HepG2 (cell line): ENCODE measurements at regions of chr15 and their contacts with region 1.

Region 1: GRCh38 chr15:73240866-73241499 is 127.8 kb downstream of the HCN4 start:
- DNase-seq: peak; percentile 59
- ATAC-seq: peak; percentile 45; the same call in 2 of the 3 replicates
- H3K4me3 ChIP-seq: no peak overlapping the region
- H3K27ac ChIP-seq: no peak overlapping the region
- H3K4me1 ChIP-seq: no peaks in the 10 kb centered on the region
- H3K27me3 ChIP-seq: no peaks in the 10 kb centered on the region
- CTCF ChIP-seq: peak; percentile 82
- EP300 ChIP-seq: no peak
- POLR2A ChIP-seq: no peak
- RAD21 ChIP-seq: peak; percentile 42; the same call in 1 of the 2 replicates

Region 2: GRCh38 chr15:72796515-72797337 is 444.3 kb before region 1 on chr15:
- CTCF ChIA-PET with region 1: no interaction called
- POLR2A ChIA-PET with region 1: no interaction called
- in situ Hi-C with region 1: no loop called
- intact Hi-C with region 1: loop called (anchors 10 kb)
- DNase-seq: no peak
- ATAC-seq: peak; percentile 96
- H3K4me3 ChIP-seq: peak overlapping the region; percentile 56 to 81 (median 65)
- H3K27ac ChIP-seq: no peak overlapping the region
- H3K4me1 ChIP-seq: peaks cover 10% of the 10 kb centered on the region; the same call in 1 of the 2 replicates
- H3K27me3 ChIP-seq: peaks cover 1 to 14% of the 10 kb centered on the region in 2 experiments; a peak in 4 of 5 replicates
- CTCF ChIP-seq: peak; percentile 54; the same call in 1 of the 2 replicates
- EP300 ChIP-seq: no peak
- POLR2A ChIP-seq: no peak
- RAD21 ChIP-seq: peak; percentile 82

Region 3: GRCh38 chr15:73127301-73127936 is 113.6 kb before region 1 on chr15:
- CTCF ChIA-PET with region 1: no interaction called
- POLR2A ChIA-PET with region 1: no interaction called
- in situ Hi-C with region 1: no loop called
- intact Hi-C with region 1: loop called (anchors 1 kb)
- DNase-seq: peak; percentile 33
- ATAC-seq: peak; percentile 81
- H3K4me3 ChIP-seq: no peak overlapping the region
- H3K27ac ChIP-seq: no peak overlapping the region
- H3K4me1 ChIP-seq: no peaks in the 10 kb centered on the region
- H3K27me3 ChIP-seq: no peaks in the 10 kb centered on the region
- CTCF ChIP-seq: peak; percentile 73
- EP300 ChIP-seq: no peak
- POLR2A ChIP-seq: no peak
- RAD21 ChIP-seq: no peak

Region 4: DNA sequence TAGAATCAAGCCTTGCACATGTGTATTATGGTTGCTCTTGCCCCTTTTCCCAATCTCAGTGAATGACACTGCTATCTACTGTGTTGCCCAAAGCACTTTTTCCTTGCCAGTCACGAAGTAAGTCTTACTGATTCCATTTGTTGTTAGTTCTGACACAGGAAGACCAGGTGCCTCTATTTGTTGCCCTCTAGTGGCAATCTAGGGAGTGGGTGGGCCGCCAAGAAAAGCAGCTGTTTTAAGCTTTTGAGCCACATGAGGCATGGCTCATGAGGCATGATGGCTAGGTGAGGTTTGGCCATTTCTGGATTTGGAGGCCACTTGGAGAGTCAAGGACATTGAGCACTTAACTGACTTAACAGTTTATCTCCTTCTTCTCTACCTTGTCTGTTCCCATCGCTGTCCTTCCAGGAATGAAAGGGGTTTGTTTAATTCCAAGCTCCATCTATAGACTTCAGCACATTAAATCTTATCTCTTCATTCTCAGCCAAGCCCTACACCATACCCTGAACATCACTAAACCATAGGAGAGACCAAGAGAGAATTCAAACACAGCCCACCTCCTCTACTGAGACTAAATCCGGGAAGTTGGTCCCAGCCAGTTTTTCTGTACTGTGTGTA is 24.7 kb after region 1 on chr15:
- CTCF ChIA-PET with region 1: interaction called, 10 read pairs
- POLR2A ChIA-PET with region 1: no interaction called
- in situ Hi-C with region 1: no loop called
- intact Hi-C with region 1: no loop called
- DNase-seq: peak; percentile 52
- ATAC-seq: peak; percentile 77
- H3K4me3 ChIP-seq: no peak overlapping the region
- H3K27ac ChIP-seq: no peak overlapping the region
- H3K4me1 ChIP-seq: peaks cover 9% of the 10 kb centered on the region
- H3K27me3 ChIP-seq: no peaks in the 10 kb centered on the region
- CTCF ChIP-seq: peak; percentile 61
- EP300 ChIP-seq: no peak
- POLR2A ChIP-seq: no peak
- RAD21 ChIP-seq: no peak

Region 5: DNA sequence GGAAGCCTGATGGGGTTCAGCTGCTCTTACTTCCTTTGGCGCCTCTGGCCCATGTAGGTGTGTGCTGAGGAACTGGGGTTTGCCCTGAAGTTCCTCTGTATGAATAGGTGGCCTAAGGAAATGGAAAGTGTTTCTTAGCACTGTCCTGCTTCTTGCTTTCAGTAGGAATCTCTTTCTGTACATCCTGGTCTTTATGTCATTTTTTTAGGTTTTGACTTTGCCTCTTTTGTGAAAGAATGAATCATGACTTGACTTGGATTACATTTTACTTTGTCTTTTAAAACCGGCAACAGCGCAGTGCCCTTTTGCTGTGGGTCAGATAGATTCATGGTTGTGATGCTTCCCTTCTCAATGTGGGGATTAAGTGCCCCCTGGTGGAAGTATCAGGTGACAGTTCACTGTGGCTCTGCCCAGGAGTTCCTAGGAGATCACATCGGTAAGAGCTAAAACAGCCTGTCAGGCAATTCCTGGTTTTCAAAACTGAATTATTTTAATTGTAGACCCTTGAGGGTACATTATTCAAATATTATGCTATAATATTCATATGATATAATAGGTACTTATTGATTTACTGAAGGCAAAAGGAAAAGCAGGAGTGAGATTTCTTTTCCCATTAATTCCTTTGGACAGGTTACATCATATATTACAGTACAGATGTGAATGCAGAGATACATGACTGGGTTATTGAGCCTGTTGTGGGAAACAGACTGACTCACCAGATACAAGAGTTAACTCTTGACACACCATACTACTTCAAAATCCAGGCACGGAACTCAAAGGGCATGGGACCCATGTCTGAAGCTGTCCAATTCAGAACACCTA is 32.4 kb after region 1 on chr15:
- CTCF ChIA-PET with region 1: interaction called, 32 read pairs
- POLR2A ChIA-PET with region 1: no interaction called
- in situ Hi-C with region 1: no loop called
- intact Hi-C with region 1: loop called (anchors 1 kb)
- DNase-seq: peak; percentile 42
- ATAC-seq: peak; percentile 82
- H3K4me3 ChIP-seq: no peak overlapping the region
- H3K27ac ChIP-seq: no peak overlapping the region
- H3K4me1 ChIP-seq: peaks cover 20% of the 10 kb centered on the region
- H3K27me3 ChIP-seq: no peaks in the 10 kb centered on the region
- CTCF ChIP-seq: peak; percentile 77
- EP300 ChIP-seq: no peak
- POLR2A ChIP-seq: no peak
- RAD21 ChIP-seq: 0 out of 2 replicates have a peak, but pooled peaks have one; percentile 28